ENCODE measurements at regions of chr2 and their contacts with region 1.

Region 1: GRCh38 chr2:165015052-165015642 is 59.8 kb upstream of the SLC38A11 start:
- DNase-seq: peak in 1 of 2 experiments; percentile 85
- H3K4me3 ChIP-seq: no peak overlapping the region
- H3K27ac ChIP-seq: no peak overlapping the region
- H3K4me1 ChIP-seq: peaks cover 0 to 5% (median under 1%) of the 10 kb centered on the region in 4 experiments; a peak in 2 of 7 replicates
- H3K27me3 ChIP-seq: no peaks in the 10 kb centered on the region
- CTCF ChIP-seq: peak; percentile 84 to 86 (median 86)
- EP300 ChIP-seq: no peak
- POLR2A ChIP-seq: no peak
- RAD21 ChIP-seq: peak; percentile 81 to 83

Region 2: DNA sequence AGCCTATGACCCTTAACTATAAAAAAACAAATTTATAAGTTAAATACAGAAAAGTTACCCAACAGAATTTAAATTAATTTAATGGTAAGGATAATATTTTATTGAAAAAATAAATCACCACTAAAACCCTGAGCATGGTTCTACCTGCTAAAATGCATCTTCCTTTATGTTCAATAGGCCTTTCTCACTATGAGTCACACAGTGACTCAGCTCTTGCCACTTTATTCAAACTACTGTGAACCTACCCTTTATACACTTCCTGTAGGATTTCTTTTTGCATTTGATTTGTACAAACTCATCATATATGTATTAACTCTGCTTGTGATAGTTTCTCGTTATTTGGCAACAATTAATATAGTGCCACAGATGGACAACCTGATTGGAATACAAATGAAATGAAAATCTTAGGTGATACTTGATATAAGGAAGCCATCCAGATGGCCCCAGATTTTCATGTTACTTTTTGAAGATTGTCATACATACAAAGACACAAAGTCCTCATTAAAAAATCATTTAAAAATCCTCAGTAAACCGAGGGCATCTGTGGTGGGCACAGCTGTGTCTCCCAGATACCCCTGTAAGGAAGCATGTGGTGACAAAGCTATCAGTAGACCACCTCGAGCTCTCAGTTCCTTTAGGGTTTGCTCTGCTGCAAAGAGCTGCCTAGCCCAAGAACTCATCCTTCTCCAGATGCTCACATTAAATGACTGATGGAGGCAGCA is 118.4 kb before region 1 on chr2:
- CTCF ChIA-PET with region 1: no interaction called
- POLR2A ChIA-PET with region 1: no interaction called
- DNase-seq: no peak
- H3K4me3 ChIP-seq: no peak overlapping the region
- H3K27ac ChIP-seq: no peak overlapping the region
- H3K4me1 ChIP-seq: peaks cover 0 to 6% (median under 1%) of the 10 kb centered on the region in 4 experiments; a peak in 2 of 7 replicates
- H3K27me3 ChIP-seq: no peaks in the 10 kb centered on the region
- CTCF ChIP-seq: no peak
- EP300 ChIP-seq: no peak
- POLR2A ChIP-seq: no peak
- RAD21 ChIP-seq: no peak

Region 3: DNA sequence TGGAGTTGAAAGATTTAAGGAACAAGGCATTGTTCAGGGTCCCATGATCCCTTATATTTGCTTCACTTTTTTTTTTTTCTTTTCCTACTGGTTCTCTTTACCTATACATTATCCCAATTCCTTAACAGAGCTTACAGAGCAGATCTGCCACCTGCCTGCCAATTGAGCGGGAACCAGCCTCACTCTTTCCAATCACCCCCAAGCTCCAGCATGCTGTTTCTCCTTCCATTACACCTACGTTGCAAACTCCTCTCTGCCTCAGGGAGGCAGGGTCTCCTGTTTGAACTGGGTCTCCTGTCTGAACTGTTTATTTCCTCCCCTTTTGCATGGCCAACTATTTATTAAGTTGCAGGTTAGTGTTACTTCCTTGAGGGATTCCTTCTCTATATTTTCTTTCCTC is 17.4 kb after region 1 on chr2:
- CTCF ChIA-PET with region 1: interaction called, 15 read pairs
- POLR2A ChIA-PET with region 1: no interaction called
- DNase-seq: no peak
- H3K4me3 ChIP-seq: no peak overlapping the region
- H3K27ac ChIP-seq: no peak overlapping the region
- H3K4me1 ChIP-seq: no peaks in the 10 kb centered on the region
- H3K27me3 ChIP-seq: no peaks in the 10 kb centered on the region
- CTCF ChIP-seq: no peak
- EP300 ChIP-seq: no peak
- POLR2A ChIP-seq: no peak
- RAD21 ChIP-seq: peak; percentile 13 to 28; a peak in 3 of 4 replicates

Region 4: DNA sequence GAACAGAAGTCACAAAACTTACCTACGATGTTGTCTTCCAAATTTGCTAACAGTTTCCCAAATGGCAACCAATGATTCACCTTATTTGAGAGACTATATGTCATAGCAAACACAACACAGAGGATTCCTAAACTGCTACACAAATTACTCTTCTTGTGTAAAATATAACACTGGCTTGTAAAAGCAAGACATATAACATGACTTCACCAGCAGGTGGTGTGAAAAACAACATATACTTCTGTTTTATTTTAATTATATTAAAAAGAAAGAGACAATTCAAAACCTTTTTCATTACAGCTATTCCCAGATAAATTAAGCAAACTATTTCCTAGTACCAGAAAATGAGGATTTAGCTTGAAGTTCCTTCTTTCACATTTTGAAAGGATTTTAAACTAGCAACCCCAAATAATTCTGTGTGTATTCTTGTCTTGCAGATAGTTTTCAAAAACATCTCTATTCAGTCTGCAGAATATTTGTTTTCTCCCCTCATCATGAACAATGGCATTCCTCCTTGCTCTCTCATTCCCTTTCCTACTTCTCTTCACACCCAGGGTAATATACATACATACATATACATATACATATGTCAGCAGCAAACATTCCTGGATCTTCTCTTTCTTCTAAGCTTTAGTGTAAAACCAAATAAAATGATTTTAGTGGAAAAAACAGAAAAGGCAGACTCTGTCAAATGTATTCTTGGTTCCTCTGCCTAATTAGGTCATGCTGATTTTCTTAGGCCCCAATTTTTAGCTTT is 126.6 kb after region 1 on chr2:
- CTCF ChIA-PET with region 1: interaction called, 10 read pairs
- POLR2A ChIA-PET with region 1: no interaction called
- DNase-seq: no peak
- H3K4me3 ChIP-seq: no peak overlapping the region
- H3K27ac ChIP-seq: no peak overlapping the region
- H3K4me1 ChIP-seq: no peaks in the 10 kb centered on the region
- H3K27me3 ChIP-seq: no peaks in the 10 kb centered on the region
- CTCF ChIP-seq: no peak
- EP300 ChIP-seq: no peak
- POLR2A ChIP-seq: no peak
- RAD21 ChIP-seq: no peak

Region 5: DNA sequence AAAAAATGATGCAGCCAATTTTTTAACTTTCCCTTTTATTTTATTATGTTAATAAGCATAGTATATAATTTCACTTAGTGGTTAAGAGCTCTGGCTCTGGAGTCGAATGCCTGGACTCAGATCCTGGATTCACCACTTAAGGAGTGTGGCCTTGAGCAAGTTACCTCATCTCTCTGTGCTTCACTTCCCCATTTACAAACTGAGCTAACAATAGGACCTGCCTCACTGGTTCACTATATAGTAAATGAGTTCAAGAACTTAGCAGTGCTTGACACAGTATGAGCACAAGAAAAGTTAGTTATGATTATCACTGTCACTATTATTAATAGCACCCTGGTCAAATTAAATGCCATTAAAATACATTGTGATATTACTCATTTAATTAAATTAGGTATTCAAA is 158.1 kb after region 1 on chr2:
- CTCF ChIA-PET with region 1: interaction called, 11 read pairs
- POLR2A ChIA-PET with region 1: no interaction called
- DNase-seq: no peak
- H3K4me3 ChIP-seq: no peak overlapping the region
- H3K27ac ChIP-seq: no peak overlapping the region
- H3K4me1 ChIP-seq: no peaks in the 10 kb centered on the region
- H3K27me3 ChIP-seq: peaks cover 0 to 1% (median 0%) of the 10 kb centered on the region in 4 experiments; a peak in 1 of 7 replicates
- CTCF ChIP-seq: no peak
- EP300 ChIP-seq: no peak
- POLR2A ChIP-seq: no peak
- RAD21 ChIP-seq: no peak

Region 6: GRCh38 chr2:165191096-165191728 is 176.1 kb after region 1 on chr2:
- CTCF ChIA-PET with region 1: interaction called, 218 read pairs
- POLR2A ChIA-PET with region 1: no interaction called
- DNase-seq: no peak
- H3K4me3 ChIP-seq: no peak overlapping the region
- H3K27ac ChIP-seq: no peak overlapping the region
- H3K4me1 ChIP-seq: no peaks in the 10 kb centered on the region
- H3K27me3 ChIP-seq: no peaks in the 10 kb centered on the region
- CTCF ChIP-seq: no peak
- EP300 ChIP-seq: no peak
- POLR2A ChIP-seq: no peak
- RAD21 ChIP-seq: no peak

Region 7: GRCh38 chr2:165239230-165239629 is 224.1 kb after region 1 on chr2 and contains the start of gene SCN2A:
- CTCF ChIA-PET with region 1: interaction called, 12 read pairs
- POLR2A ChIA-PET with region 1: no interaction called
- DNase-seq: no peak
- H3K4me3 ChIP-seq: no peak within 1 kb of the TSS
- H3K27ac ChIP-seq: no peak within 1 kb of the TSS
- H3K4me1 ChIP-seq: no peaks in the 10 kb centered on the region
- H3K27me3 ChIP-seq: no peaks in the 10 kb centered on the region
- CTCF ChIP-seq: peak in 2 of 3 experiments; percentile 61 to 63; a peak in 3 of 4 replicates
- EP300 ChIP-seq: no peak
- POLR2A ChIP-seq: no peak
- RAD21 ChIP-seq: peak; percentile 80
- total RNA-seq, gene SCN2A: 0.61 and 1.1 TPM in 2 replicates

Region 8: DNA sequence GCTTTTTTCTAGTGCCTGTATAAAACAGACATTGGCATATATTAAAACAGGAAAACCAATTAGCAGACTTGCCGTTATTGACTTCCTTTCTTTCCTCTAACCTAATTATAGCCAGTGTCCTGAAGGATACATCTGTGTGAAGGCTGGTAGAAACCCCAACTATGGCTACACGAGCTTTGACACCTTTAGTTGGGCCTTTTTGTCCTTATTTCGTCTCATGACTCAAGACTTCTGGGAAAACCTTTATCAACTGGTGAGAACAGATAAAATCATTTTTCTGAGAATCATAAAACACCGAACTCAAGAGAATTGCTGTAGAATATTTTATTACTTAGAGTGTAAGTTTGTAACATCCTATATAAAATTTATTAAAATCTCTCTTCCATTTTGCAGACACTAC is 298.4 kb after region 1 on chr2:
- CTCF ChIA-PET with region 1: no interaction called
- POLR2A ChIA-PET with region 1: no interaction called
- DNase-seq: no peak
- H3K4me3 ChIP-seq: no peak overlapping the region
- H3K27ac ChIP-seq: no peak overlapping the region
- H3K4me1 ChIP-seq: no peaks in the 10 kb centered on the region; a peak in 1 of 7 replicates
- H3K27me3 ChIP-seq: peaks cover 0 to 1% (median 0%) of the 10 kb centered on the region in 4 experiments; a peak in 1 of 7 replicates
- CTCF ChIP-seq: no peak
- EP300 ChIP-seq: no peak
- POLR2A ChIP-seq: no peak
- RAD21 ChIP-seq: no peak

Measured in H1 (cell line).